Activated CD4-positive, alpha-beta T cell treated with anti-CD3 and anti-CD28 coated beads, Interleukin-2, amount 10 ng/mL, durations not matched to agents 24 days and 14 days (primary cell): ENCODE measurements at regions of chr11 and their contacts with region 1.

Region 1: GRCh38 chr11:12043959-12044819 is 35.8 kb upstream of the DKK3 start:
- DNase-seq: peak; percentile 90
- H3K4me3 Mint-ChIP-seq: no peak overlapping the region
- H3K27ac Mint-ChIP-seq: peak overlapping the region; percentile 2
- H3K4me1 Mint-ChIP-seq: peaks cover 19% of the 10 kb centered on the region
- H3K27me3 Mint-ChIP-seq: peaks cover 16% of the 10 kb centered on the region

Region 2: GRCh38 chr11:11931461-11932055 is 112.6 kb before region 1 on chr11:
- intact Hi-C with region 1: loop called (anchors 1 kb)
- DNase-seq: peak; percentile 68
- H3K4me3 Mint-ChIP-seq: no peak overlapping the region
- H3K27ac Mint-ChIP-seq: no peak overlapping the region
- H3K4me1 Mint-ChIP-seq: peaks cover 2% of the 10 kb centered on the region
- H3K27me3 Mint-ChIP-seq: no peaks in the 10 kb centered on the region